ENCODE measurements at regions of chr20 and their contacts with region 1.

Region 1: GRCh38 chr20:354298-355064 is 7.6 kb downstream of the NRSN2 start:
- DNase-seq: peak; percentile 38
- H3K4me3 ChIP-seq: no peak overlapping the region
- H3K27ac ChIP-seq: no peak overlapping the region
- H3K27me3 ChIP-seq: no peaks in the 10 kb centered on the region
- CTCF ChIP-seq: peak; percentile 93

Region 2: DNA sequence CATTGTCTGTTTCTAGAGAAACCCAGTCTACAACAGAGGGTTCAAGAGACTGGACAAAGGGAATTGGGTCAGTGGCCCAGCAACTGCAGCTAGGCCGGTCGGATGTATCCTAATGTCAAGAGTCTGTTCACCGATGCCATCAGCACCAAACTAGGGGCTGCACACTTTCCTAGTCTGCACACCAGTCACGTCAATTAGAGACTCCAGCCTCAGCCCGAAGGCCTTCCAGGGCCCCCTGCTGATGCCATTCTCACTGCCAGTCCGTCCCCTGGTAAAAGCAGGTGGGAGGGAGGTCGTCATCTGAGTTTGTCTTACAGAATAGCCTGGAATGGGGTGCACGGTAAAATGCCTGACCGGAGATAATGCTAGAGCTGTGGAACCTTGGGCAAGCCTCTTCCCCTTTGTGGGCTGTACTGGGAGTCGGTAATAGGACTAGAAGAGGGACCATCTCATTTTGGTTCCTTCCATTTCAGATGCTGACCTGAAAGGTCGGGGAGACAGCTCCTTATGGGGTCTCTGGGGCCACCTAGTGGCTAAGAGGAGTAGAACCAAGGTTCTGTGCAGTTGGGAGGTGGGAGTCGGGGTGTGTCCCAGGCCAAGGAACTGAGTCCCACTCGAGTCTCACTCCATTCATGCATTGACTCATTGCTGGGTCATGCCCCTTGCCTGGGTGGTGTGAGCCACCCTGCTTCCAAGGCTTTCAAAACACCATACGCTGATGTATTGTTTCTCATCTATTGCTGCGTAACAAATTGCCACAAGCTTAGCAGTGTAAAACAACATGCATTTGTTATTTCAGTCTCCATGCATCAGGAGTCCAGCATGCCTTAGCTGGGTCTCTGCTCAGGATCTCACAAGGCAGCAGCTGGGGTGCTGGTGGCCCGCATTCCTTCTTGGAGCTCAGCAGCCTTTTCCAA is 24.0 kb before region 1 on chr20:
- CTCF ChIA-PET with region 1: interaction called, 16 read pairs
- POLR2A ChIA-PET with region 1: no interaction called
- DNase-seq: no peak
- H3K4me3 ChIP-seq: no peak overlapping the region
- H3K27ac ChIP-seq: no peak overlapping the region
- H3K27me3 ChIP-seq: no peaks in the 10 kb centered on the region
- CTCF ChIP-seq: peak; percentile 92

Region 3: GRCh38 chr20:371755-372542 is 17.5 kb after region 1 on chr20:
- CTCF ChIA-PET with region 1: interaction called, 27 read pairs
- POLR2A ChIA-PET with region 1: no interaction called
- DNase-seq: no peak
- H3K4me3 ChIP-seq: no peak overlapping the region
- H3K27ac ChIP-seq: peak overlapping the region; percentile 88
- H3K27me3 ChIP-seq: no peaks in the 10 kb centered on the region
- CTCF ChIP-seq: no peak

Region 4: GRCh38 chr20:381581-382290 is 27.3 kb after region 1 on chr20:
- CTCF ChIA-PET with region 1: interaction called, 11 read pairs
- POLR2A ChIA-PET with region 1: interaction called, 12 read pairs
- DNase-seq: no peak
- H3K4me3 ChIP-seq: peak overlapping the region; percentile 83
- H3K27ac ChIP-seq: peak overlapping the region; percentile 61
- H3K27me3 ChIP-seq: no peaks in the 10 kb centered on the region
- CTCF ChIP-seq: no peak

Region 5: GRCh38 chr20:431012-431904 is 76.8 kb after region 1 on chr20:
- CTCF ChIA-PET with region 1: interaction called, 23 read pairs
- POLR2A ChIA-PET with region 1: no interaction called
- DNase-seq: peak; percentile 23
- H3K4me3 ChIP-seq: no peak overlapping the region
- H3K27ac ChIP-seq: peak overlapping the region; percentile 31
- H3K27me3 ChIP-seq: no peaks in the 10 kb centered on the region
- CTCF ChIP-seq: peak; percentile 64

Region 6: GRCh38 chr20:478949-479429 is 124.5 kb after region 1 on chr20:
- CTCF ChIA-PET with region 1: interaction called, 59 read pairs
- POLR2A ChIA-PET with region 1: interaction called, 5 read pairs
- DNase-seq: peak; percentile 42
- H3K4me3 ChIP-seq: no peak overlapping the region
- H3K27ac ChIP-seq: peak overlapping the region; percentile 86
- H3K27me3 ChIP-seq: no peaks in the 10 kb centered on the region
- CTCF ChIP-seq: peak; percentile 63

Region 7: DNA sequence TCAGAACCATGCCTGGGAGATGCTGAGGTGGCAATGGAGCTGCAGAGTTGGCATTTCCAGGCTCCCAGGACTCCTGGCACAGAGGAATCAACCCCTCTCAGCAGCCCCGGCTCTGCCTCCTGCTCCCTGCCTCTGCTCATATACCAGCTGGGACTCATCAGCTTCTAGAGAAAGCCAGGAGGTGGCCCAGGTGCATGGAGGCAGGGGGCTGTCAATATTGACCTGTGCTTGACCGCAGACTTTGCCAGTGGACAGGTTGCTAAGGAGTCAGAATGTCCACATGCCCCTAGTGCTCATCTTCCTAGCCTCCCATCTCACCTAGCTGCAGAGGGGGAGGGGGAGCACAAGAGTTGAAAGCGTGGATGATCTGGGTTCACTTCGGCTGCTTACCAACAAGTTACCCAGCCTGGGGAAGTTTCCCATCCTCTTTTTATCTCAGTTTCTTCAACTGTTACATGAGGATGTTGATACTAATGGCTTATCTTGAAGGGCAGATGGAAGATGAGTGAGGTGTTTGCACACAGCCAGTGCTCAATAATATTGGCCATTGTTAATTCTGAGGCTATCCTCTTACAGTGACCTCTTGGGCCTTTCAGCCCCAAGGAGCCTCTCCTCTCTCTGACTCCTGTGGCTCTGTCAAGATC is 330.3 kb after region 1 on chr20:
- CTCF ChIA-PET with region 1: no interaction called
- POLR2A ChIA-PET with region 1: no interaction called
- DNase-seq: no peak
- H3K4me3 ChIP-seq: no peak overlapping the region
- H3K27ac ChIP-seq: no peak overlapping the region
- H3K27me3 ChIP-seq: peaks cover 16% of the 10 kb centered on the region
- CTCF ChIP-seq: no peak

Measured in AG04450 (cell line).